ENCODE measurements at regions of chr17 and their contacts with region 1.

Region 1: DNA sequence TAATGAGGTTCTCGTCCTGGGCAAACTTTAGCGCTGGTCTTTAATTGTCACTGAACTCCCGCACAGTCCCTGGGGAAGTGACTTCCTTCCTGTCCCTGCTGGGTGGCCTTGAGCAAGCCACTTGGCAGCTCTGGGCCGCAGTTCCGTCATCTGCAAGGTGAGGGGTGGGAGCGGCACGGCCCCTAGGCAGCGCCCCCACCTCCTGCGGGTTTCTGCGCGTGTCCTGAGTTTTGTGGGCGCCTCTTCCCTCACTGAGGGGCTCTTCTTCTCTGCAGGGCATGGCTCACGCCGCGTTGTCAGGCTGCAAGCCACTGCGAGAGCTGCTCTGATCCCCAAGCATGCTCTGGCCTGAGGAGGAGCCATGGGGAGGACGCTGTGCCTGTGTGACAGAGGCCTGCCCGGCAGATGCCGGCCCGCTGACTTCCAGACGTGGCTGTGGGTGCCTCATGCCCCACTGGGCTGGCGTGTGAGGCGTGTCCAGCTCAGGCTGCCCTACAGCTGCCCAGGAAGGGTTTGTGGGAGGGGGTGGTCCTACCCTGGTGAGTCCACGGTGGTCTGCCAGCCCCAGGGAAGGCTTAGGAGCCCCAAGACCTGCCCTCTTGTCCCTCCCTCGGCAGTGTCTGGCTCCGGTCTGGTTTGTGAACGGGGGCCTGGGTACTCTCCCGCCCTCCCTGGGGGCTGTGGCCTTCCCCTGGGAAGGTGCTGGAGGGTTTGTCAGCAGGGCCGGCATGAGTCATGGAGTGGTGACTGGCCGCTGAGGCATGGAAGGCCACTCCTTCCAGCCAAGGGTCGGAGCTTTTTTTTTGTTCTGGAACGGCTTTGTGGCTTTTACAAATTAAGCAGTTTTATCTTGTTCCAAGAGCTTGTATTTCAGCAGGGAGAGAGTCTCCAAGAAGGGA is 182.0 kb downstream of the SEC14L1 start:
- DNase-seq: no peak
- H3K4me3 ChIP-seq: no peak overlapping the region
- H3K4me3 Mint-ChIP-seq: peak overlapping the region in 1 of 8 donors; percentile 13
- H3K27ac ChIP-seq: no peak overlapping the region
- H3K27ac Mint-ChIP-seq: no peak overlapping the region
- H3K4me1 ChIP-seq: peaks cover 69% of the 10 kb centered on the region
- H3K4me1 Mint-ChIP-seq: peaks cover 30 to 68% (median 51%) of the 10 kb centered on the region in 4 donors
- H3K27me3 ChIP-seq: no peaks in the 10 kb centered on the region
- H3K27me3 Mint-ChIP-seq: no peaks in the 10 kb centered on the region

Region 2: GRCh38 chr17:77382966-77383612 is 60.3 kb after region 1 on chr17:
- CTCF ChIA-PET with region 1: no interaction called
- POLR2A ChIA-PET with region 1: interaction called, 10 read pairs
- intact Hi-C with region 1: no loop called
- DNase-seq: no peak
- H3K4me3 ChIP-seq: peak overlapping the region in 1 of 2 donors; percentile 41
- H3K4me3 Mint-ChIP-seq: peak overlapping the region; percentile 74 to 94 (median 82)
- H3K27ac ChIP-seq: peak overlapping the region; percentile 50
- H3K27ac Mint-ChIP-seq: peak overlapping the region; percentile 82 to 95 (median 90)
- H3K4me1 ChIP-seq: peaks cover 98% of the 10 kb centered on the region
- H3K4me1 Mint-ChIP-seq: peaks cover 56 to 97% (median 84%) of the 10 kb centered on the region in 4 donors
- H3K27me3 ChIP-seq: no peaks in the 10 kb centered on the region
- H3K27me3 Mint-ChIP-seq: no peaks in the 10 kb centered on the region

Region 3: GRCh38 chr17:77391668-77392375 is 69.1 kb after region 1 on chr17:
- CTCF ChIA-PET with region 1: no interaction called
- POLR2A ChIA-PET with region 1: interaction called, 10 read pairs
- intact Hi-C with region 1: no loop called
- DNase-seq: peak; percentile 39 to 75 (median 48)
- H3K4me3 ChIP-seq: peak overlapping the region in 1 of 2 donors; percentile 11
- H3K4me3 Mint-ChIP-seq: peak overlapping the region; percentile 57 to 84 (median 67)
- H3K27ac ChIP-seq: peak overlapping the region; percentile 50
- H3K27ac Mint-ChIP-seq: peak overlapping the region; percentile 86 to 95 (median 89)
- H3K4me1 ChIP-seq: peaks cover 95% of the 10 kb centered on the region
- H3K4me1 Mint-ChIP-seq: peaks cover 39 to 91% (median 78%) of the 10 kb centered on the region in 4 donors
- H3K27me3 ChIP-seq: no peaks in the 10 kb centered on the region
- H3K27me3 Mint-ChIP-seq: no peaks in the 10 kb centered on the region

Region 4: GRCh38 chr17:77602062-77602746 is 279.4 kb after region 1 on chr17:
- CTCF ChIA-PET with region 1: no interaction called
- POLR2A ChIA-PET with region 1: no interaction called
- intact Hi-C with region 1: no loop called
- DNase-seq: no peak
- H3K4me3 ChIP-seq: no peak overlapping the region
- H3K4me3 Mint-ChIP-seq: no peak overlapping the region
- H3K27ac ChIP-seq: no peak overlapping the region
- H3K27ac Mint-ChIP-seq: no peak overlapping the region
- H3K4me1 ChIP-seq: no peaks in the 10 kb centered on the region
- H3K4me1 Mint-ChIP-seq: no peaks in the 10 kb centered on the region
- H3K27me3 ChIP-seq: no peaks in the 10 kb centered on the region
- H3K27me3 Mint-ChIP-seq: no peaks in the 10 kb centered on the region

Region 5: GRCh38 chr17:77744066-77744988 is 421.6 kb after region 1 on chr17:
- CTCF ChIA-PET with region 1: no interaction called
- POLR2A ChIA-PET with region 1: no interaction called
- intact Hi-C with region 1: no loop called
- DNase-seq: no peak
- H3K4me3 ChIP-seq: no peak overlapping the region
- H3K4me3 Mint-ChIP-seq: no peak overlapping the region
- H3K27ac ChIP-seq: no peak overlapping the region
- H3K27ac Mint-ChIP-seq: peak overlapping the region in 2 of 7 donors; percentile 18 to 30
- H3K4me1 ChIP-seq: no peaks in the 10 kb centered on the region
- H3K4me1 Mint-ChIP-seq: no peaks in the 10 kb centered on the region
- H3K27me3 ChIP-seq: no peaks in the 10 kb centered on the region
- H3K27me3 Mint-ChIP-seq: peaks cover 0 to 4% of the 10 kb centered on the region in 2 donors

Measured in CD4-positive, alpha-beta memory T cell (primary cell).